Cardiac septum (tissue), 1 donor: ENCODE measurements at regions of chr17 and their contacts with region 1.

Region 1: DNA sequence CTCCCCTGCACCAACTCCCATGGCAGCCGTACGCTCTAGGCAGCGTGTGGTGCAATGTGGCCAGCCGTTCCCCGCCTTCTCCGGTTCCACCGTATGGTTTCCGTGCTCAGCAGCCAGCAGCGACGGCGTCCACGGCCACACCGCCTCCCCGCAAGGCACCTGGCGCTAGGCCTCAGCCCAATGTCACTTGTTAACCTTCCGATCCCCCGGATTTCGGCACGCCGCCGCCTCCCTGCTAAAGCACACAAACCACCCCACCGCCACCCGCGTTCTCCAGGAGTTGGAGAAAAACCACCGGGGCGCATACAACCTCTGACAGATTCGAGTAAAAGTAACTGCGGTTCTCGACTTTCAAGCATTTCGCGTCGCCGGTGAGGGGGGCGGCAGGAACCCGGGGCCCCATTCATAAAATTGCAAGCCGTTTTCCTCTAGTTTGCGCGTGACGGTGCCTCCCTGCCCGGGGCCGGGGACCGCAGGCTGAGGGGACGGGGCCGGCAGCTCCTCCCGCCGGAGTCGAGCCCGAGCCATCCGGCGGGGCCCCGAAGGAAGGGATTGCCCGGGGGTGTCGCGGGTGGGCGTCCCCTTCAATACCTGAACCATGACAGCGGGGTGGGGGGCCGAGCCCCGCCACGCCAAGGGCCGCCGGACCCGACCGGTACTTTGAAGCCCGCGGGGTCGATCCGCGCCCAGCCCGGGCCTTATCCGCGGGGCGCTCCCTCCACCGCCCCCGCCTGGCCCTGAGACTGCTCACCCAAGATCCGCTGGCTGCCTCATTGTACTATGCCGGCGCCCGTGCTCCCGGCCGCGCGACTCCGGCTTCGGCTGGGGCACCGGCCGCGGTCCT is at the start of gene TEX2:
- DNase-seq: peak; percentile 78
- total RNA-seq, gene TEX2: 48.8 TPM

Region 2: GRCh38 chr17:63859257-63859656 is 403.4 kb before region 1 on chr17:
- intact Hi-C with region 1: no loop called
- DNase-seq: no peak

Region 3: GRCh38 chr17:63946440-63947367 is 315.9 kb before region 1 on chr17:
- intact Hi-C with region 1: no loop called
- DNase-seq: peak; percentile 87

Region 4: DNA sequence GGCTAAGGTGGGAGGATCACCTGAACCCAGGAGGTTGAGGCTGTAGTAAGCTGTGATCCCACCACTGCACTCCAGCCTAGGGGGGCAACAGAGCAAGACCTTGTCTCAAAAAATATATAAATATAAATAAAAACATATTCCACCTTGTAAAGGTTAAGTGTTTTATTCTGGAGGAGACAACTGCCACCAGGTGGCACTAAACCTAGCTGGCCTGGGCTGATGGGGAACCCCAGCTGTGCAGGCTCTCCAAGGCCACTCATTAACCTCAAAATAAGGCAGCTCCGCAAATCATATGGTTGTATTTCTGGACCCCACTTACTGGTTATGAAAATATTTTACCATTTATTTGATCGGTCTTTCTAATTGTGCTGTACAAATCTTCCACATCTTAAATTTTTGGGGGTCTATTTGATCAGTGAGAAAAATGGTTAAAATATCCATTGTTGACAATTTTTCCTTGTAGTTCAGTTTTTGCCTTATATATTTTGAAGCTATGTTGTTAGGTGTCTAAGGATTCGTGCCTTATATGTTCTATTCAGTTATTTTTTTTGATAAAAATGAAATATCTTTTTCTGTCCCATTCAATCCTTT is 233.7 kb before region 1 on chr17:
- intact Hi-C with region 1: no loop called
- DNase-seq: no peak

Region 5: DNA sequence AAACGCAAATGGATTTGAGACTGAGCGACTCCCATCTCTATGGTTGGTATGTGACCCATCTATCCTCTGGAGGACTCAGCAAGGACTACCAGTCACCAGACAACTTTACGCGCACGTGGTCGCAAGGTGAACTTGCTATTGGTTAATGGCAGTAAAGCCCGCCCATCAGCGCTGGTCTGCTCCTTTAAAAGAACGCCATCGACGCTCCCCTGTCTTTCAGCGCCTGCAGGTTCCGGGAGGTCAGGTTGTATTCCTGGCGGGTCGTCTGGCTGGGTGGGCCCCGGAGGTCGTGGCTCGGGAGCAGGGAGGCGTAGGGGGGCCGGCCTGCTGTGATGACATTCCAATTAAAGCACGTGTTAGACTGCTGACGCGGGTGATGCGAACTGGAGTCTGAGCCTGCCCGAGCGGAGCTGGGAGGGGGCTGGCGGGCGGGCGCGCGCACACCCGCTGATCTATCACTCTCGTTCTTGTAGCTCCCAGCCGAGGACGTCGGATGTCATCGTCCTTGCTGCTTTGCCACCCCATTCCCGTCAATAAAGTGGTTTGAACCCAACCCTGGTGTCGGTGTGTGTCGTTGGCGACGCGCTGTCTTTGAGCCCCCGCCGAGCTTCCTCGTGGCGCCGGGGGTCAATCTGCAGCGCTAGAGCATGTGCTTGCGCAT is 116.8 kb before region 1 on chr17:
- intact Hi-C with region 1: loop called (anchors 5 kb)
- DNase-seq: peak; percentile 99

Region 6: GRCh38 chr17:64291254-64291851 is 28.7 kb after region 1 on chr17:
- intact Hi-C with region 1: no loop called
- DNase-seq: no peak